Activated CD4-positive, alpha-beta memory T cell treated with anti-CD3 and anti-CD28 coated beads, Interleukin-2, amount 10 ng/mL, durations not matched to agents 7 days and 5 days (primary cell): ENCODE measurements at regions of chr11 and their contacts with region 1.

Region 1: DNA sequence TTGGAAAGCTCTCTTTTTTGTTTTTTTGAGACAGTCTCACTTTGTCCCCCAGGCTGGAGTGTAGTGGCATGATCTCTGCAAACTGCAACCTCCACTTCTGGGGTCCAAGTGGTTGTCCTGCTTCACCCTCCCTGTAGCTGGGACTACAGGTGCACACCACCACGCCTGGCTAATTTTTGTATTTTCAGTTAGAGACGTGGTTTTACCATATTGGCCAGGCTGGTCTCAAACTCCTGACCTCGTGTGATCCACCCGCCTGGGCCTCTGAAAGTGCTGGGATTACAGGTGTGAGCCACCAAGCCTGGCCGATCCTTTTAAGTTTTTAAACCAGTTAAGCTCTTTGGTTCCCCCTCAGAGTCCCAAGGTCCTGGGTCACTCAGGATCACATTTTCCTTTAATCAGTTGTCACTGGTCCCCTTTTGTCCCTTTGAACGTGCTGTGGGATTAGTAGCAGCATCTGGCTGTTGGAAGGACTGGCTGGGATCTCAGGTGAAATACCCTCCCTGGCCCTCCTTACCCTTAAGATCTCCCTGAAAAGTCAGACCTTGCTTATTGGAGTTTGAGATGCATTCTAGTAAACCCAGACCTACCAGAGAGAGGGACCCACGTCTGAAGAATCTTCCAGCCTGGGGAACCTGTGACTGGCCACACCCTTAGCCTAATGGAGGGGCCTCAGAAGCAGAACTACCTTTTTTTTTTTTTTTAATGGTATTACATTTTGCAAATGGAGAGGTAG is 8.1 kb downstream of the MALAT1 start:
- DNase-seq: peak; percentile 40
- H3K4me3 Mint-ChIP-seq: no peak overlapping the region
- H3K27ac Mint-ChIP-seq: peak overlapping the region; percentile 70
- H3K4me1 Mint-ChIP-seq: peaks cover 53% of the 10 kb centered on the region
- H3K27me3 Mint-ChIP-seq: no peaks in the 10 kb centered on the region

Region 2: GRCh38 chr11:65329944-65330403 is 177.0 kb before region 1 on chr11:
- CTCF ChIA-PET with region 1: interaction called, 7 read pairs
- POLR2A ChIA-PET with region 1: interaction called, 21 read pairs
- DNase-seq: peak; percentile 82
- H3K4me3 Mint-ChIP-seq: no peak overlapping the region
- H3K27ac Mint-ChIP-seq: no peak overlapping the region
- H3K4me1 Mint-ChIP-seq: peaks cover 14% of the 10 kb centered on the region
- H3K27me3 Mint-ChIP-seq: no peaks in the 10 kb centered on the region

Region 3: GRCh38 chr11:65382033-65382807 is 124.7 kb before region 1 on chr11 and contains the start of gene SLC25A45:
- CTCF ChIA-PET with region 1: interaction called, 12 read pairs
- POLR2A ChIA-PET with region 1: interaction called, 443 read pairs
- DNase-seq: peak; percentile 93
- H3K4me3 Mint-ChIP-seq: peak within 1 kb of the TSS; percentile 81
- H3K27ac Mint-ChIP-seq: peak within 1 kb of the TSS; percentile 99
- H3K4me1 Mint-ChIP-seq: peaks cover 59% of the 10 kb centered on the region
- H3K27me3 Mint-ChIP-seq: no peaks in the 10 kb centered on the region
- total RNA-seq, gene SLC25A45: 19.4 to 19.8 TPM

Region 4: GRCh38 chr11:65440831-65441499 is 66.0 kb before region 1 on chr11:
- CTCF ChIA-PET with region 1: no interaction called
- POLR2A ChIA-PET with region 1: interaction called, 18 read pairs
- DNase-seq: no peak
- H3K4me3 Mint-ChIP-seq: no peak overlapping the region
- H3K27ac Mint-ChIP-seq: peak overlapping the region; percentile 82
- H3K4me1 Mint-ChIP-seq: peaks cover 73% of the 10 kb centered on the region
- H3K27me3 Mint-ChIP-seq: no peaks in the 10 kb centered on the region

Region 5: GRCh38 chr11:65471410-65471762 is 35.6 kb before region 1 on chr11:
- CTCF ChIA-PET with region 1: interaction called, 13 read pairs
- POLR2A ChIA-PET with region 1: interaction called, 1,583 read pairs
- DNase-seq: no peak
- H3K4me3 Mint-ChIP-seq: no peak overlapping the region
- H3K27ac Mint-ChIP-seq: peak overlapping the region; percentile 96
- H3K4me1 Mint-ChIP-seq: peaks cover 38% of the 10 kb centered on the region
- H3K27me3 Mint-ChIP-seq: no peaks in the 10 kb centered on the region

Region 6: GRCh38 chr11:65569973-65570918 is 63.3 kb after region 1 on chr11 and contains the start of gene ZNRD2:
- CTCF ChIA-PET with region 1: no interaction called
- POLR2A ChIA-PET with region 1: interaction called, 13 read pairs
- DNase-seq: peak; percentile 99
- H3K4me3 Mint-ChIP-seq: peak within 1 kb of the TSS; percentile 100
- H3K27ac Mint-ChIP-seq: peak within 1 kb of the TSS; percentile 99
- H3K4me1 Mint-ChIP-seq: peaks cover 71% of the 10 kb centered on the region
- H3K27me3 Mint-ChIP-seq: no peaks in the 10 kb centered on the region
- total RNA-seq, gene ZNRD2: 25.3 to 27.8 TPM

Region 7: DNA sequence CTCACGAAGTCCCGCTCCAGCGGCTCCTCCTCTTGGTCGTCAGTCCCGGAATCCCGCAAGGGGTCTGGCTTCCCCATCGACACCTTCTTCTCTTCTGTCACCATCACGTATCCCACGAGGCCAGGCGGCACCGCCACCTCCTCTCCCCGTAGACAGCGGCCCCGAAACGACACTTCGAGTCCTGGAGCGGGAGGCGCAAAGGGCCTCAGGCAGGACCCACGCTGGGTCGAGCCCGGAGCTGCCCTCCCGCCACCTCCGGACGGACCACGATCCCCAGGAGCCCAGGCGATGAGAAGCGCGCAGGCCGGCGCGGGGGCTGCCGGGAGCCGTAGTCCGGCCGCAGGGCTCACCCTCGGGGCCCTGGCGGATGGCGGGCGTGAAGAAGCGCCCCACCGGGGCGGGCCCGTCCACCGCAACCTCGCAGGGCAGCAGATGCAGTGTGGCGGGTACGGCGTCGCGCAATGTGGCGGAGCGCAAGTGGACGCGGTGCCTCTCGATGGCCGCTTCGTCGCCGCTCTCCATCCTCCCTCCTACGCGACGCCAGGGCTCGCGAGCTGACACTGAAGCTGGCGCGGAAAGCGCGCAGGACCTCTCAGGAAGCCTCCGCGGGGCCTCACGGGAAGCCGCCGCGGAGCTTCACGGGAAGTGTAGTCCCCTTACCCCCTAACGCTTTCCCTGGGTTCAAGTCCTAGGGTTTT is 213.4 kb after region 1 on chr11 and contains the start of gene RNASEH2C:
- CTCF ChIA-PET with region 1: no interaction called
- POLR2A ChIA-PET with region 1: no interaction called
- DNase-seq: peak; percentile 84
- H3K4me3 Mint-ChIP-seq: peak within 1 kb of the TSS; percentile 93
- H3K27ac Mint-ChIP-seq: peak within 1 kb of the TSS; percentile 77
- H3K4me1 Mint-ChIP-seq: peaks cover 40% of the 10 kb centered on the region
- H3K27me3 Mint-ChIP-seq: peaks cover 2% of the 10 kb centered on the region
- total RNA-seq, gene RNASEH2C: 80.3 to 81.9 TPM